ENCODE measurements at regions of chr2 and their contacts with region 1.

Region 1: GRCh38 chr2:235595422-235596010 is 101.7 kb downstream of the AGAP1 start:
- DNase-seq: peak; percentile 69 to 87 (median 76)
- H3K4me3 ChIP-seq: no peak overlapping the region
- H3K27ac ChIP-seq: no peak overlapping the region
- H3K4me1 ChIP-seq: peaks cover 0 to 3% (median 0%) of the 10 kb centered on the region in 3 donors
- H3K27me3 ChIP-seq: no peaks in the 10 kb centered on the region
- CTCF ChIP-seq: peak; percentile 83

Region 2: DNA sequence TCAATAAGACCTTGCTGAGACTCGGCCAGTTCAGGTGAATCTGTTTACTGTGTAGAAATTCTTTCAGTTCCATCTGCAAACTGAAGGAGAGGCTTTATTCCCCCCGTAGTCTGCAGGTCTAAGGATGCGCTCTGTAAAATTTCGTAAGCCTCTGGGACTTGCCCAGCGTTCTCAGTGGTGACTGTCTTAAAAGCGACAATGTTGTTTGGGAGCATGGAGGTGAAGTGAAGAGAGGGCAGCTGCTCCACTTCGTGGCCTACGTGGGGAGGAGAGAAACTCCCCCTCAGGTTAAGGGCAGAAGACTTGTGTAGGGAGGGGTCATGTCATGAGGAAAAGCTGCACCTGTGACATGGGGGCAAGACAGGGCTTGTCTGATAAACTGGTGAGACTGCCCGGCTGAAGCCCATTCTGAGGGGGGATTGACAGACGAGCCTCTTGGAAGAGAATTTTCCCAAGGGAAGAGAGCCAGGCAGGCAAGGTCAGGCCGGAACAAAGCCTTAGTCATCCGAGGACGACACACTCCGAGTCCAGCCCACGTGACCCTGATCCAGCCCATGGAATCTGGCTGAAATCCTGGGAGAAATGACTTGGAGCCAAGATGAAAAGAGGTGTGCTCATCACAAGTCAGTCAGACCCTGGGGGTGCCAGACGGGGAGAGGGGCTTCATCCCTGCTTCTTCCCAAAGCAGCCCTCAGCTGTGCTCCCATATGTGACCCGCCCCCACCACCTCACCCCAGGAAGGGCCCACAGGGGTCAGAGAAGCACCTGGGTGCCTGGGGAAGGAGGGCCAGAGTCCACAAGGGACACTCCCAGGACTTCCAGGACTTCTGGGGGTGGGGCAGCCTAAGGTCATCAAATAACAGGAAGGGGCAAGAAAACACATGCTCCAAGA is 732.2 kb before region 1 on chr2:
- intact Hi-C with region 1: no loop called
- DNase-seq: no peak
- H3K4me3 ChIP-seq: no peak overlapping the region
- H3K27ac ChIP-seq: peak overlapping the region; percentile 38 to 41
- H3K4me1 ChIP-seq: peaks cover 2 to 22% (median 16%) of the 10 kb centered on the region in 3 donors
- H3K27me3 ChIP-seq: no peaks in the 10 kb centered on the region
- CTCF ChIP-seq: no peak

Region 3: GRCh38 chr2:235135990-235136561 is 459.4 kb before region 1 on chr2:
- intact Hi-C with region 1: loop called (anchors 5 kb)
- DNase-seq: peak; percentile 69 to 87 (median 77)
- H3K4me3 ChIP-seq: no peak overlapping the region
- H3K27ac ChIP-seq: no peak overlapping the region
- H3K4me1 ChIP-seq: no peaks in the 10 kb centered on the region
- H3K27me3 ChIP-seq: no peaks in the 10 kb centered on the region
- CTCF ChIP-seq: peak; percentile 66

Region 4: GRCh38 chr2:235149240-235149659 is 446.3 kb before region 1 on chr2:
- intact Hi-C with region 1: no loop called
- DNase-seq: no peak
- H3K4me3 ChIP-seq: no peak overlapping the region
- H3K27ac ChIP-seq: no peak overlapping the region
- H3K4me1 ChIP-seq: no peaks in the 10 kb centered on the region
- H3K27me3 ChIP-seq: no peaks in the 10 kb centered on the region
- CTCF ChIP-seq: no peak

Region 5: GRCh38 chr2:235746257-235747084 is 151.0 kb after region 1 on chr2:
- intact Hi-C with region 1: loop called (anchors 10 kb)
- DNase-seq: peak in 4 of 5 donors; percentile 65 to 94 (median 80)
- H3K4me3 ChIP-seq: no peak overlapping the region
- H3K27ac ChIP-seq: no peak overlapping the region
- H3K4me1 ChIP-seq: no peaks in the 10 kb centered on the region
- H3K27me3 ChIP-seq: no peaks in the 10 kb centered on the region
- CTCF ChIP-seq: peak; percentile 82

Measured in kidney (tissue), 22 donors.